GM12878 (cell line): ENCODE measurements at regions of chr19 and their contacts with region 1.

Region 1: GRCh38 chr19:28466107-28467045 is 746.6 kb downstream of the UQCRFS1 start:
- DNase-seq: no peak
- ATAC-seq: no peak
- H3K4me3 ChIP-seq: no peak overlapping the region
- H3K27ac ChIP-seq: no peak overlapping the region
- H3K4me1 ChIP-seq: no peaks in the 10 kb centered on the region
- H3K27me3 ChIP-seq: no peaks in the 10 kb centered on the region
- CTCF ChIP-seq: peak; percentile 45 to 51 (median 51); a peak in 5 of 6 replicates
- EP300 ChIP-seq: no peak
- POLR2A ChIP-seq: no peak
- RAD21 ChIP-seq: peak; percentile 43

Region 2: DNA sequence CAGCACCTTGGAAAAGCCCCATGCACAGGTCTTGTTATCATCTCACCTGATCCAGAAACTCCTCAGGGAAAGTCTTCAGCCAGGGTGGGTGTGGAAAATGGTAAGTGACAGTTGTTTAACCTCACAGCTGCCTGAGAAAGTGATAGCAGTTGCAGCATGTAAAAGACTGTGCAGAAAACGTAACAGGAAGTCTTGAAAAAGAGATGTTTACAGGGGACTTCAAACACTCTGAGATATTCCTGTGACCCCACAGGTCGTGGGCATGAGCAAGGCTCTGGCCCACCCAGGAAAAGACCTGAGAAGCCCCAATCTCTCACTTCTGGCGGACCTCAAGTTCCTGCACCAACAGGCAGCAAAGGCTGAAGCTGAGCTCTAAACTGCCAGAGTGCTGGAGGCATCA is 80.3 kb before region 1 on chr19:
- CTCF ChIA-PET with region 1: no interaction called
- POLR2A ChIA-PET with region 1: no interaction called
- RAD21 ChIA-PET with region 1: no interaction called
- SMC1A ChIA-PET with region 1: no interaction called
- in situ Hi-C with region 1: no loop called
- intact Hi-C with region 1: no loop called
- DNase-seq: no peak
- ATAC-seq: no peak
- H3K4me3 ChIP-seq: no peak overlapping the region
- H3K27ac ChIP-seq: no peak overlapping the region
- H3K4me1 ChIP-seq: no peaks in the 10 kb centered on the region
- H3K27me3 ChIP-seq: no peaks in the 10 kb centered on the region
- CTCF ChIP-seq: no peak
- EP300 ChIP-seq: no peak
- POLR2A ChIP-seq: no peak
- RAD21 ChIP-seq: no peak

Region 3: GRCh38 chr19:28500982-28501630 is 34.7 kb after region 1 on chr19:
- CTCF ChIA-PET with region 1: interaction called, 5 read pairs
- POLR2A ChIA-PET with region 1: interaction called, 5 read pairs
- RAD21 ChIA-PET with region 1: interaction called, 17 read pairs
- SMC1A ChIA-PET with region 1: interaction called, 14 read pairs
- in situ Hi-C with region 1: no loop called
- intact Hi-C with region 1: no loop called
- DNase-seq: no peak
- ATAC-seq: no peak
- H3K4me3 ChIP-seq: no peak overlapping the region
- H3K27ac ChIP-seq: no peak overlapping the region
- H3K4me1 ChIP-seq: no peaks in the 10 kb centered on the region
- H3K27me3 ChIP-seq: no peaks in the 10 kb centered on the region
- CTCF ChIP-seq: no peak
- EP300 ChIP-seq: no peak
- POLR2A ChIP-seq: no peak
- RAD21 ChIP-seq: no peak

Region 4: DNA sequence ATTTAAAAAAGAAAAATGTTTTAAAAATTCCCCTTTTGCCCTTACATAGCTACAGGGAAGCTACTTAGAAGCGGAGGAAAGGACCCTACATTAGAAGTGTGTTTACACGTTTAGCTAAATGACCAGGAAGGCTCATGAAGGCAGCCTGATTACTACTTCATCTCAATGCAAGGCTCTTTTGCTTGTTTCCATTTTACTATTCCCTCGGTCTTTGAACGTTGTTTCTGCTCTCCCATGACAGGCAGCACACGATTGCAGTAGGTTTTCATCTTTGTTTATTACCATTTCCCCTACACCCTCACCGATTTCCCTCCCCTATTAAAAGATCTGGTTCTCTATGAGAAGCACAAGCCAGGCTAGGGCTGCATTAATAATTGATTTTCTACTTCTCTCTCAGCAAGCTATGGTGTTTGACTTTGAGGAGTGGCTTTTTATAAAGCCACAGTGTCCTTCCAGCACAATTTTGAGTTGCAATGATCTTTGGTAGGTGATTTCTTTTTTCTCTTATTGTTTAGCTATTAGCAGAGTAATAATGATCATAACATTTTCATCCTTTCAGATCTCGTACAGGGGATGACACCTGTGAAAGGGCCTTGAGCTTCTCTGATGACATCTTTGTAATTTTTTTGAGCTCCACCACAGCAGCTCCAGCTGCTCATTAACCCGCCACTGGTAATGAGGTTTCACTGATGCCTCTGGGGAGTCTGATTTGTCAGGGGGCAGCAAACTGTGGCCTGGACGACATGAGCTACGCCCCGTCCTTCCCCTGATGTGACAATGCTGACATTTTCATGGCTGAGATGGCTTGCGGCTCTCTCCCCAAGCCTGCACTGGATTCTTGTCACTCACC is 76.2 kb after region 1 on chr19:
- CTCF ChIA-PET with region 1: interaction called, 13 read pairs
- POLR2A ChIA-PET with region 1: interaction called, 4 read pairs
- RAD21 ChIA-PET with region 1: interaction called, 37 read pairs
- SMC1A ChIA-PET with region 1: interaction called, 50 read pairs
- in situ Hi-C with region 1: no loop called
- intact Hi-C with region 1: no loop called
- DNase-seq: no peak
- ATAC-seq: no peak; the same call in 2 of the 3 replicates
- H3K4me3 ChIP-seq: no peak overlapping the region
- H3K27ac ChIP-seq: no peak overlapping the region
- H3K4me1 ChIP-seq: no peaks in the 10 kb centered on the region
- H3K27me3 ChIP-seq: no peaks in the 10 kb centered on the region
- CTCF ChIP-seq: no peak
- EP300 ChIP-seq: no peak
- POLR2A ChIP-seq: no peak
- RAD21 ChIP-seq: no peak

Region 5: DNA sequence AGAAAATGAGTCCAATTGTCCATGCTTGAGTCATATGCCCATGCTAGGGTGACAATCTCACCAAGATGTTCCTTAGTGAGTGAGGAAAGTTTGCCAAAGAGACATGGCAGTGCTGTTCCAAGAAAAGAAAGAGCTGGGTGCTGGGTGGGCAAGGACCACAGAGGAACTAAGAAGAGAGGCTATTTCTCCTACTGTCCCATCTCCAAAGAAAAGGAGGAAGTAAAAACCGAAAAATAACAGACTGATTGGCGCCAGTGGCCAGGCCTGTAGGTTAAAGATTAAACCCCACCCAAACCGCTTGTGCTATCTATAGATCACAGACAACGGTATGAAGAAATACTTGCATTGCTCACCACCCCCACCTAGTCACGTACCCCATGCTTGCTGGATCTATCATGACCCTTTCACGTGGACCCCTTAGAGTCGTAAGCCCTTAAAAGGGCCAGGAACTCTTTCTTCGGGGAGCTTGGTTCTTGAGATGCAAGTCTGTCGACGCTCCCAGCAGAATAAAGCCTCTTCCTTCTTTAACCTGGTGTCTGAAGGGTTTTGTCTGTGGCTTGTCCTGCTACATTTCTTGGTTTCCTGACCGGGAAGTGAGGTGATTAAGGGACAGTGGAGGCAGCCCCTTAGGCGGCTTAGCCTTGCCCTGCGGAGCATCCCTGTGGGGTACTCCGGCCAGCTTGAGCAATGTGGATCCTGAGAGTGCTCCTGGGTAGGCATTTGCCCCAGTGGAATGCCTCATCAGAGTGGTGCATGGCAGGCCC is 140.1 kb after region 1 on chr19:
- CTCF ChIA-PET with region 1: interaction called, 25 read pairs
- POLR2A ChIA-PET with region 1: interaction called, 7 read pairs
- RAD21 ChIA-PET with region 1: interaction called, 4 read pairs
- SMC1A ChIA-PET with region 1: interaction called, 13 read pairs
- in situ Hi-C with region 1: no loop called
- intact Hi-C with region 1: no loop called
- DNase-seq: no peak
- ATAC-seq: no peak
- H3K4me3 ChIP-seq: no peak overlapping the region
- H3K27ac ChIP-seq: no peak overlapping the region
- H3K4me1 ChIP-seq: no peaks in the 10 kb centered on the region
- H3K27me3 ChIP-seq: no peaks in the 10 kb centered on the region
- CTCF ChIP-seq: no peak
- EP300 ChIP-seq: no peak
- POLR2A ChIP-seq: no peak
- RAD21 ChIP-seq: no peak

Region 6: GRCh38 chr19:28633319-28634018 is 167.1 kb after region 1 on chr19:
- CTCF ChIA-PET with region 1: interaction called, 72 read pairs
- POLR2A ChIA-PET with region 1: interaction called, 4 read pairs
- RAD21 ChIA-PET with region 1: interaction called, 77 read pairs
- SMC1A ChIA-PET with region 1: interaction called, 26 read pairs
- in situ Hi-C with region 1: no loop called
- intact Hi-C with region 1: no loop called
- DNase-seq: no peak
- ATAC-seq: peak; percentile 20; the same call in 1 of the 3 replicates
- H3K4me3 ChIP-seq: no peak overlapping the region
- H3K27ac ChIP-seq: no peak overlapping the region
- H3K4me1 ChIP-seq: no peaks in the 10 kb centered on the region
- H3K27me3 ChIP-seq: no peaks in the 10 kb centered on the region
- CTCF ChIP-seq: peak; percentile 52 to 63 (median 53); a peak in 5 of 6 replicates
- EP300 ChIP-seq: no peak
- POLR2A ChIP-seq: no peak
- RAD21 ChIP-seq: peak; percentile 51

Region 7: GRCh38 chr19:28646629-28647028 is 180.3 kb after region 1 on chr19:
- CTCF ChIA-PET with region 1: no interaction called
- POLR2A ChIA-PET with region 1: no interaction called
- RAD21 ChIA-PET with region 1: no interaction called
- SMC1A ChIA-PET with region 1: no interaction called
- in situ Hi-C with region 1: no loop called
- intact Hi-C with region 1: no loop called
- DNase-seq: no peak
- ATAC-seq: no peak
- H3K4me3 ChIP-seq: no peak overlapping the region
- H3K27ac ChIP-seq: no peak overlapping the region
- H3K4me1 ChIP-seq: no peaks in the 10 kb centered on the region
- H3K27me3 ChIP-seq: no peaks in the 10 kb centered on the region
- CTCF ChIP-seq: no peak
- EP300 ChIP-seq: no peak
- POLR2A ChIP-seq: no peak
- RAD21 ChIP-seq: no peak

Region 8: GRCh38 chr19:28878862-28879566 is 412.6 kb after region 1 on chr19:
- CTCF ChIA-PET with region 1: interaction called, 8 read pairs
- POLR2A ChIA-PET with region 1: no interaction called
- RAD21 ChIA-PET with region 1: interaction called, 6 read pairs
- SMC1A ChIA-PET with region 1: interaction called, 3 read pairs
- in situ Hi-C with region 1: no loop called
- intact Hi-C with region 1: loop called (anchors 2 kb)
- DNase-seq: no peak
- ATAC-seq: peak; percentile 54; the same call in 2 of the 3 replicates
- H3K4me3 ChIP-seq: no peak overlapping the region
- H3K27ac ChIP-seq: no peak overlapping the region
- H3K4me1 ChIP-seq: no peaks in the 10 kb centered on the region
- H3K27me3 ChIP-seq: no peaks in the 10 kb centered on the region
- CTCF ChIP-seq: peak; percentile 32 to 60 (median 39); a peak in 5 of 6 replicates
- EP300 ChIP-seq: no peak
- POLR2A ChIP-seq: no peak
- RAD21 ChIP-seq: peak; percentile 79